ENCODE measurements at regions of chr4 and their contacts with region 1.

Region 1: GRCh38 chr4:57163530-57164459 is 53.6 kb upstream of the IGFBP7 start:
- DNase-seq: peak; percentile 82 to 93 (median 93)
- ATAC-seq: peak; percentile 97 to 98
- H3K4me3 ChIP-seq: peak overlapping the region; percentile 57
- H3K27ac ChIP-seq: no peak overlapping the region
- H3K4me1 ChIP-seq: no peaks in the 10 kb centered on the region
- H3K27me3 ChIP-seq: no peaks in the 10 kb centered on the region

Region 2: DNA sequence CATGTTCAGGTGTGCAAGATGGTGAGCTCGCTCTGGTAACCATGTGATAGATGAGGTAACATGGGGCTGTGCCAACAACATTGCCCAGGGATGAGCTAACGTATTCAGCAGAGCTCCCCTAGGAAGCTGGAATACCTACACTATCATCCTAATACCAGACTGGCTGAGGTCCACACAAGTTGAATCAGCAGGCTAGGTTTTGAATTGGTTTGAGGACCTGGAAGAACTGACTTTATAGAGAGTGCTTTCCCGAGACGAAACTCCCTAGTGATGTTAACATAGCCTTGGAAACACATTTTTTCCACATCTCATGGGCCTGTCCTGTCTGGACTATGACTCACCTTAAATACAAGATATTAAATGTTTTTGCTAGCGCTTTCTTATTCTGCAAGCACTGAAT is 110.3 kb before region 1 on chr4:
- intact Hi-C with region 1: no loop called
- DNase-seq: no peak
- ATAC-seq: peak in 1 of 2 donors; percentile 19
- H3K4me3 ChIP-seq: no peak overlapping the region
- H3K27ac ChIP-seq: no peak overlapping the region
- H3K4me1 ChIP-seq: peaks cover 12% of the 10 kb centered on the region
- H3K27me3 ChIP-seq: no peaks in the 10 kb centered on the region

Region 3: GRCh38 chr4:57270346-57270745 is 106.6 kb after region 1 on chr4:
- intact Hi-C with region 1: loop called in 1 of 4 experiments (anchors 10 kb)
- DNase-seq: peak; percentile 59 to 80 (median 75)
- ATAC-seq: peak; percentile 94 to 98
- H3K4me3 ChIP-seq: no peak overlapping the region
- H3K27ac ChIP-seq: peak overlapping the region; percentile 54
- H3K4me1 ChIP-seq: peaks cover 1% of the 10 kb centered on the region
- H3K27me3 ChIP-seq: no peaks in the 10 kb centered on the region

Region 4: DNA sequence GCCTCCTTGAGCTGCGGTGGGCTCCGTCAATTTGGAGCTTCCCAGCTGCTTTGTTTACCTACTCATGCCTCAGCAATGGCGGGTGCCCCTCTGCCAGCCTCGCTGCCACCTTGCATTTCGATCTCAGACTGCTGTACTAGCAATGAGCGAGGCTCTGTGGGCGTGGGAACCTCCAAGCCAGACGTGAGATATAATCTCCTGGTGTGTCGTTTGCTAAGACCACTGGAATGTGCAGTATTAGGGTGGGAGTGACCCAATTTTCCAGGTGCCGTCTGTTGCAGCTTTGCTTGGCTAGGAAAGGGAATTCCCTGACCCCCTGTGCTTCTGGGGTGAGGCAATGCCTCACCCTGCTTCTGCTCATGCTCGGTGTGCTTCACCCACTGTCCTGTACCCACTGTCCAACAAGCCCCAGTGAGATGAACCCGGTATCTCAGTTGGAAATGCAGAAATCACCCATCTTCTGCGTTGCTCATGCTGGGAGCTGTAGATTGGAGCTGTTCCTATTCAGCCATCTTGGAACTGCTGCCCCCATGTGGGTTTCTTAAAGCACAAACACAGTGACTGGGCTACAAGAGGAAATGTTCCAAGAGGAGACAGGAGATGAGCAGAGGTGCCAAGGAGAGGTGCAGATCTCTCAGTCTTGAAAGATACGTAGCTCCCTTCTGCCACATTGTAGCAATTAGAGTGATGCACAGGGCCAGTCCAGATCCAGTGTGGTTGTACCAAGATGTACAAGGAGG is 139.4 kb after region 1 on chr4:
- intact Hi-C with region 1: loop called in 2 of 4 experiments (anchors 2 to 10 kb)
- DNase-seq: no peak
- ATAC-seq: no peak
- H3K4me3 ChIP-seq: no peak overlapping the region
- H3K27ac ChIP-seq: no peak overlapping the region
- H3K4me1 ChIP-seq: no peaks in the 10 kb centered on the region
- H3K27me3 ChIP-seq: no peaks in the 10 kb centered on the region

Region 5: GRCh38 chr4:57410331-57411052 is 246.7 kb after region 1 on chr4:
- intact Hi-C with region 1: loop called in 1 of 4 experiments (anchors 10 kb)
- DNase-seq: peak; percentile 38 to 56 (median 38)
- ATAC-seq: peak; percentile 94 to 95
- H3K4me3 ChIP-seq: no peak overlapping the region
- H3K27ac ChIP-seq: peak overlapping the region; percentile 81
- H3K4me1 ChIP-seq: no peaks in the 10 kb centered on the region
- H3K27me3 ChIP-seq: no peaks in the 10 kb centered on the region